Naive thymus-derived CD4-positive, alpha-beta T cell (primary cell): ENCODE measurements at regions of chr6 and their contacts with region 1.

Region 1: GRCh38 chr6:27132532-27133280 is 114.8 kb upstream of the PRSS16 start:
- DNase-seq: peak; percentile 73 to 99 (median 97)
- ATAC-seq: peak; percentile 93
- H3K4me3 ChIP-seq: peak overlapping the region; percentile 90
- H3K4me3 Mint-ChIP-seq: no peak overlapping the region
- H3K27ac ChIP-seq: peak overlapping the region; percentile 81
- H3K27ac Mint-ChIP-seq: no peak overlapping the region
- H3K4me1 ChIP-seq: peaks cover 10 to 18% of the 10 kb centered on the region in 2 donors
- H3K4me1 Mint-ChIP-seq: peaks cover 6 to 49% (median 21%) of the 10 kb centered on the region in 7 donors
- H3K27me3 ChIP-seq: no peaks in the 10 kb centered on the region
- H3K27me3 Mint-ChIP-seq: no peaks in the 10 kb centered on the region

Region 2: GRCh38 chr6:26054857-26055669 is 1077.6 kb before region 1 on chr6:
- CTCF ChIA-PET with region 1: no interaction called
- POLR2A ChIA-PET with region 1: interaction called, 3 read pairs
- intact Hi-C with region 1: loop called in 1 of 2 experiments (anchors 2 kb)
- DNase-seq: peak; percentile 54 to 94 (median 90)
- ATAC-seq: peak; percentile 81
- H3K4me3 ChIP-seq: peak overlapping the region; percentile 93
- H3K4me3 Mint-ChIP-seq: peak overlapping the region; percentile 88 to 99 (median 95)
- H3K27ac ChIP-seq: peak overlapping the region; percentile 83
- H3K27ac Mint-ChIP-seq: peak overlapping the region; percentile 95 to 99 (median 98)
- H3K4me1 ChIP-seq: peaks cover 0 to 14% of the 10 kb centered on the region in 2 donors
- H3K4me1 Mint-ChIP-seq: peaks cover 9 to 52% (median 10%) of the 10 kb centered on the region in 7 donors
- H3K27me3 ChIP-seq: no peaks in the 10 kb centered on the region
- H3K27me3 Mint-ChIP-seq: peaks cover 0 to 10% (median 0%) of the 10 kb centered on the region in 5 donors

Region 3: DNA sequence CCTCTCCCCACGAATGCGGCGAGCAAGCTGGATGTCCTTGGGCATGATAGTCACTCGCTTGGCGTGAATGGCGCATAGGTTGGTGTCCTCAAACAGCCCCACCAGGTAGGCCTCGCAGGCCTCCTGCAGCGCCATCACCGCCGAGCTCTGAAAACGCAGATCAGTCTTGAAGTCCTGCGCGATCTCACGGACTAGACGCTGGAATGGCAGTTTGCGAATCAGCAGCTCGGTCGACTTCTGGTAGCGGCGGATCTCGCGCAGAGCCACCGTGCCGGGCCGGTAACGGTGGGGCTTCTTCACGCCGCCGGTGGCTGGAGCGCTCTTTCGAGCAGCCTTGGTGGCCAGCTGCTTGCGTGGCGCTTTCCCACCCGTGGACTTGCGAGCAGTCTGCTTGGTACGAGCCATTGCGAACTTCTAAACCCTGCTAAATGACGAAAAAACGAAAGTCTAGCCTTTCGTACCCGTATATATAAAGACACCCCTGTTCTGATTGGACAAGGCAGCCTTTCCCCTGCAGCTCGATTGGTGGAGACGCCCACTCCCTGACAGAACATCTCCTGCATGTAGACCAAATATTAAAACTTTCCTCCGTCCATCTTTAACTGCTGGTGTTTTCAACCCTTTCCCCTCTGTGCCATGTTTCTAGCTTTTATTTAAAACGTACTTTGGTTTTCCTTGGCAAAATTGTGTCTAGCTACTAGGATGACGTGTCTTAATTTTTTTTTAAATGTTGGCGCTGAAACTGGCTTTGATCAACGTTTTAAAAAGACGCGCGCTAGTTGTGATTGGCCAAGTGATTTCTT is 935.7 kb before region 1 on chr6:
- CTCF ChIA-PET with region 1: interaction called, 4 read pairs
- POLR2A ChIA-PET with region 1: interaction called, 61 read pairs
- intact Hi-C with region 1: loop called in 1 of 2 experiments (anchors 1 kb)
- DNase-seq: peak; percentile 55 to 95 (median 93)
- ATAC-seq: peak; percentile 73
- H3K4me3 ChIP-seq: peak overlapping the region; percentile 92
- H3K4me3 Mint-ChIP-seq: peak overlapping the region; percentile 85 to 99 (median 96)
- H3K27ac ChIP-seq: peak overlapping the region; percentile 91
- H3K27ac Mint-ChIP-seq: peak overlapping the region; percentile 96 to 100 (median 98)
- H3K4me1 ChIP-seq: peaks cover 10 to 12% of the 10 kb centered on the region in 2 donors
- H3K4me1 Mint-ChIP-seq: peaks cover 23 to 65% (median 42%) of the 10 kb centered on the region in 7 donors
- H3K27me3 ChIP-seq: no peaks in the 10 kb centered on the region
- H3K27me3 Mint-ChIP-seq: peaks cover 0 to 12% (median 0%) of the 10 kb centered on the region in 5 donors

Region 4: GRCh38 chr6:26537846-26538571 is 594.7 kb before region 1 on chr6 and contains the start of gene HMGN4:
- CTCF ChIA-PET with region 1: no interaction called
- POLR2A ChIA-PET with region 1: interaction called, 6 read pairs
- intact Hi-C with region 1: loop called in 1 of 2 experiments (anchors 2 kb)
- DNase-seq: peak; percentile 64 to 97 (median 95)
- ATAC-seq: peak; percentile 79
- H3K4me3 ChIP-seq: peak within 1 kb of the TSS; percentile 76
- H3K4me3 Mint-ChIP-seq: peak within 1 kb of the TSS; percentile 88 to 99 (median 94)
- H3K27ac ChIP-seq: peak within 1 kb of the TSS; percentile 88
- H3K27ac Mint-ChIP-seq: peak within 1 kb of the TSS; percentile 91 to 99 (median 98)
- H3K4me1 ChIP-seq: peaks cover 20 to 23% of the 10 kb centered on the region in 2 donors
- H3K4me1 Mint-ChIP-seq: peaks cover 46 to 72% (median 60%) of the 10 kb centered on the region in 7 donors
- H3K27me3 ChIP-seq: no peaks in the 10 kb centered on the region
- H3K27me3 Mint-ChIP-seq: peaks cover 0 to 5% (median 0%) of the 10 kb centered on the region in 5 donors
- total RNA-seq, gene HMGN4: 37.6 to 96.0 (median 81.7) TPM

Region 5: GRCh38 chr6:27177485-27178406 is 45.0 kb after region 1 on chr6:
- CTCF ChIA-PET with region 1: interaction called, 7 read pairs
- POLR2A ChIA-PET with region 1: interaction called, 13 read pairs
- intact Hi-C with region 1: loop called in 1 of 2 experiments (anchors 1 kb)
- DNase-seq: peak; percentile 49 to 78 (median 66)
- ATAC-seq: peak; percentile 83
- H3K4me3 ChIP-seq: peak overlapping the region; percentile 99
- H3K4me3 Mint-ChIP-seq: peak overlapping the region; percentile 90 to 98 (median 96)
- H3K27ac ChIP-seq: peak overlapping the region; percentile 74
- H3K27ac Mint-ChIP-seq: peak overlapping the region; percentile 79 to 100 (median 95)
- H3K4me1 ChIP-seq: peaks cover 0 to 3% of the 10 kb centered on the region in 2 donors
- H3K4me1 Mint-ChIP-seq: peaks cover 0 to 33% (median 14%) of the 10 kb centered on the region in 7 donors
- H3K27me3 ChIP-seq: no peaks in the 10 kb centered on the region
- H3K27me3 Mint-ChIP-seq: peaks cover 0 to 37% (median 0%) of the 10 kb centered on the region in 5 donors

Region 6: GRCh38 chr6:27871924-27872638 is 739.4 kb after region 1 on chr6:
- CTCF ChIA-PET with region 1: interaction called, 6 read pairs
- POLR2A ChIA-PET with region 1: interaction called, 77 read pairs
- intact Hi-C with region 1: loop called (anchors 1 to 2 kb)
- DNase-seq: peak; percentile 68 to 97 (median 94)
- ATAC-seq: peak; percentile 88
- H3K4me3 ChIP-seq: peak overlapping the region; percentile 69
- H3K4me3 Mint-ChIP-seq: peak overlapping the region; percentile 83 to 99 (median 94)
- H3K27ac ChIP-seq: peak overlapping the region; percentile 84
- H3K27ac Mint-ChIP-seq: peak overlapping the region; percentile 95 to 98 (median 97)
- H3K4me1 ChIP-seq: peaks cover under 1 to 19% of the 10 kb centered on the region in 2 donors
- H3K4me1 Mint-ChIP-seq: peaks cover 15 to 69% (median 42%) of the 10 kb centered on the region in 7 donors
- H3K27me3 ChIP-seq: no peaks in the 10 kb centered on the region
- H3K27me3 Mint-ChIP-seq: peaks cover 0 to 8% (median 0%) of the 10 kb centered on the region in 5 donors

Region 7: DNA sequence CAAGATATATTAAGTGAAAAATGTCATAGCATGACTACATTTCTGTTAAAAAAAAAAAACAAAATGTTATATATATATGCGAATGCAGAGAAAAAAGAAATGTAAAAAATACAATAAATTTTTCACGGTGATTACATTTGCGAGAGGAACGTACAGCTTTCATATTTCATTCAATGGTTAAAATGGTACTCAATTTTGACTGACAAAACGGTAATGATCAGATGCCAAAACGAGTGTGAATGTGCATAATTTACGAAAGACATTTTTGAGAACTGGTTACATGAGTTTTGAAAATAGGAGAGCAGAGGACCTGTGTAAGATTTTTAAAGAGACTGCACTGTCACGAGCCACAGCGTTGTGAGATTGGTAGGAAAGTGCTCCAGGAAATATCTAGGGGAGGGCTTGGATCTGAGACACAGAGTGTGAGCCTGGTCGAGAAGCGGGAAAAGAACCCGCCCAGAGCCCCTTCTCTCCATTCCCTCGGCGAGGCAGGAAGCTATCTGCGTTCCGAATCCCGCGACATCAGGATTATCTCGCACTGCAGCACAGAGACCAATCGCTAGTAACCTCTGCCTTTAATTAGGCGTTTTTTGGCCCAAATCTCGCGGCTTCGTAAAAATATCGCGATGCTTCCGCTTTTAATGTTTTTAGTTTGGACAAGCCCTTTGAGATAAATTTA is 1762.6 kb after region 1 on chr6:
- CTCF ChIA-PET with region 1: no interaction called
- POLR2A ChIA-PET with region 1: interaction called, 8 read pairs
- intact Hi-C with region 1: loop called in 1 of 2 experiments (anchors 1 kb)
- DNase-seq: peak; percentile 72 to 95 (median 91)
- ATAC-seq: peak; percentile 83
- H3K4me3 ChIP-seq: peak overlapping the region; percentile 82
- H3K4me3 Mint-ChIP-seq: peak overlapping the region; percentile 92 to 100 (median 98)
- H3K27ac ChIP-seq: peak overlapping the region; percentile 99
- H3K27ac Mint-ChIP-seq: peak overlapping the region; percentile 98 to 100 (median 100)
- H3K4me1 ChIP-seq: peaks cover 5 to 6% of the 10 kb centered on the region in 2 donors
- H3K4me1 Mint-ChIP-seq: peaks cover 0 to 32% (median 14%) of the 10 kb centered on the region in 7 donors
- H3K27me3 ChIP-seq: no peaks in the 10 kb centered on the region
- H3K27me3 Mint-ChIP-seq: peaks cover 0 to 15% (median 0%) of the 10 kb centered on the region in 5 donors